AG04449 (cell line): ENCODE measurements at regions of chr6 and their contacts with region 1.

Region 1: GRCh38 chr6:40957616-40958492 is 81.2 kb downstream of the UNC5CL start:
- DNase-seq: no peak
- H3K4me3 ChIP-seq: no peak overlapping the region
- CTCF ChIP-seq: no peak

Region 2: DNA sequence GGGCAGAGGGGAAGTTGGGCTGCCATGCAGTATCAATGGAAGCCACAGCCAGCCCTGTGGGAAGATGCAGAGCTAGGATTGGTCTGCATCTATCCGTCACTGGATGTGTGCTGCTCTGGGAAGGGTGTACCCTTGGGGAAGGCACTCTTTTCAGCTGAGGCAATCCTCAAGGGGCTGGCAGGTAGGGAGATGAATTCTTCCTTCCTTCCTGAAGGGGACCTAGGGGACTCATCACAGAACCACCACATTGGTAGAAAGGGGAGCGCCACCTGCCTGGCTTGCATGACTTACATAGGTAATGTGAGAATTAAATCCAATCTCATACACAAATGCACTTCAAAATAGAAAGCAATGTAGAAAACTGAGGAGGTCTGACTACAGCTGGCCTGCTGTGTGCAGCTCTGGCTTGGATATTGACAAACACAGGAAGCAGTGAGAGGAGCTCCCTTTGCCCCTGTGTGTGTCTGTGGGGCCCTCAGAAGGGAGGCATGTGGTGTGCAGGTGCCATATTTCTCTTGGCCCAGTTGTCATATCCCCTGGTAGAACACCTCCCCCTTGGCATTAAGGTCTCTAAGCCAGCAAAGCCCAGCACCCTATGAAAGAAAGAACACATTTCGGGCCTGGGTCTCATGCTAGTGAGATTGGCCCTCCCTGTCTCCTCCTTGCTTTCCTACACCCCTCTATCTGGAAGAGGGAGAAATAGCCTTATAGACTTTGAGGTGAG is 763.2 kb before region 1 on chr6:
- CTCF ChIA-PET with region 1: no interaction called
- POLR2A ChIA-PET with region 1: no interaction called
- DNase-seq: no peak
- H3K4me3 ChIP-seq: no peak overlapping the region
- CTCF ChIP-seq: no peak

Region 3: GRCh38 chr6:40968620-40969164 is 10.8 kb after region 1 on chr6:
- CTCF ChIA-PET with region 1: interaction called, 11 read pairs
- POLR2A ChIA-PET with region 1: no interaction called
- DNase-seq: no peak
- H3K4me3 ChIP-seq: no peak overlapping the region
- CTCF ChIP-seq: no peak

Region 4: GRCh38 chr6:41209547-41210320 is 251.9 kb after region 1 on chr6:
- CTCF ChIA-PET with region 1: no interaction called
- POLR2A ChIA-PET with region 1: no interaction called
- DNase-seq: no peak
- H3K4me3 ChIP-seq: no peak overlapping the region
- CTCF ChIP-seq: no peak